SK-N-SH (cell line): ENCODE measurements at regions of chr2 and their contacts with region 1.

Region 1: DNA sequence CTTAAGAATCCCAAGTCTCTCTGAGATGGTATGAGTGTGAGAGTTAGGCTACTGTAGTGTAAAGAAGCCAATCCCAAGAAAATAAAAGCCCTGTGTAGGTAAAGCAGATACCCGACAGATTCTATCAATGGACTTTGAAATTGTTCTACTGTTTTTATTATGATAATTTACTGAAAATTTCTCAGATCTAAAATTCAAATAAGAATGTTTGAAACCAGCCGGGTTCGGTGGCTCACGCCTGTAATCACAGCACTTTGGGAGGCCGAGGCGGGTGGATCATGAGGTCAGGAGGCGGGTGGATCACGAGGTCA is 208.3 kb upstream of the SPRED2 start:
- DNase-seq: no peak
- H3K4me3 ChIP-seq: no peak overlapping the region
- H3K27ac ChIP-seq: no peak overlapping the region
- H3K4me1 ChIP-seq: peaks cover 0 to 5% of the 10 kb centered on the region in 2 experiments; a peak in 2 of 4 replicates
- H3K27me3 ChIP-seq: no peaks in the 10 kb centered on the region
- CTCF ChIP-seq: no peak
- EP300 ChIP-seq: no peak
- RAD21 ChIP-seq: no peak

Region 2: DNA sequence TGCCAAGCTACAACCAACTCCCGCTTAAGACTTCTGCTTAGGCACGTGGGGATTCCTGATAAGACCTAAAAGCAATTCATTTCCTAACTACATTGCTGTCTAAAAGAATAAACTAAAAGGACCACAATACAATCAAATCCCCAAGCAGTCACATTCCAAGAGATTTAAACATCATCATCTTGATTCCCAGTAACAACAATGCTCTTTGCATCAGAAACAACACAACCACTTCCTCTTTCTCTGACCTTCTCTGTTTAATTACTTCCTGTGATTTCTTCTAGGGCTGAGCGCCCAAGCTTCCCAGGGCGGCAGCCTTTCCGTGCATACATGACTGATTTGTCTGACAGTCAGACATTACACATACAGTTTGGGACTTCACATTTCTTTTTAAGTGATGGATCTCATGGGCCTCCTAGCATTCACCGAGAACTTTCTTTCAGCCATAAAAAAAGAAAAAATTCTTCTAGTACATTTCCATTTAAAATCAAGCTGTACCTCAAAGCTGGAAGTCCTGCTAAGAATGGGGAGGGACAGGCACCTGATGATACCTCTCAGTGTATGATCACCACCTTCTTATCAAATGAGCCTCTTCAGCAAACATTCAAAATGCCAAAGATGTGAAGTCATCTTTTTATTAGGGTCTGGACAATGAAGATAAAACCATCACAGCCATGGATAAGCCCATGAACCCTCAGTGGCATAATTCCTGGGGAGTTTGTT is 219.9 kb before region 1 on chr2:
- CTCF ChIA-PET with region 1: no interaction called
- POLR2A ChIA-PET with region 1: no interaction called
- DNase-seq: no peak
- H3K4me3 ChIP-seq: no peak overlapping the region
- H3K27ac ChIP-seq: peak overlapping the region in 1 of 2 experiments; percentile 31; a peak in 1 of 4 replicates
- H3K4me1 ChIP-seq: peaks cover 15 to 20% of the 10 kb centered on the region in 2 experiments; a peak in 3 of 4 replicates
- H3K27me3 ChIP-seq: no peaks in the 10 kb centered on the region
- CTCF ChIP-seq: no peak
- EP300 ChIP-seq: no peak
- RAD21 ChIP-seq: no peak

Region 3: GRCh38 chr2:65566620-65567019 is 74.1 kb before region 1 on chr2:
- CTCF ChIA-PET with region 1: no interaction called
- POLR2A ChIA-PET with region 1: no interaction called
- DNase-seq: no peak
- H3K4me3 ChIP-seq: no peak overlapping the region
- H3K27ac ChIP-seq: no peak overlapping the region
- H3K4me1 ChIP-seq: no peaks in the 10 kb centered on the region
- H3K27me3 ChIP-seq: no peaks in the 10 kb centered on the region
- CTCF ChIP-seq: no peak
- EP300 ChIP-seq: no peak
- RAD21 ChIP-seq: no peak

Region 4: DNA sequence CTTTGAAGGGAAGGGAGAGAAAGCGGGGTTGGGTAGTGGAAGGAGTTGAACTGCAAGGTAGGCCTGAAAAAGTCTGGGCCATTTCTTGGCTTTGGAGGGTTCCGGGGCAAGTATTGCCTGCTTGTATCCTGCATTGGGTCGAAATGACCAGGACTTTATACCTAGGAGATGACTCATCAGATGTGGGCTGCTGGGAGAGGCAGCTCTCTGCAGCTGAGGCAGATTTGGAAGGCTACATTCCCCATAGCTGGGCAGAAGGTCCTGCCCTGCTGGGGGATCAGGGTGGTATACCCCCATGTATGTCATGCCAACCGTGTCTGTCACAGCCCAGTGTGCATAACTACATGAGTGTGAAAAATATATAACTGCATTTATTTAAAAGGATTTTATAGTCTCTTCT is 36.5 kb before region 1 on chr2:
- CTCF ChIA-PET with region 1: no interaction called
- POLR2A ChIA-PET with region 1: no interaction called
- DNase-seq: no peak
- H3K4me3 ChIP-seq: no peak overlapping the region
- H3K27ac ChIP-seq: no peak overlapping the region
- H3K4me1 ChIP-seq: no peaks in the 10 kb centered on the region
- H3K27me3 ChIP-seq: no peaks in the 10 kb centered on the region
- CTCF ChIP-seq: no peak
- EP300 ChIP-seq: no peak
- RAD21 ChIP-seq: no peak

Region 5: GRCh38 chr2:65654496-65654895 is 13.7 kb after region 1 on chr2:
- CTCF ChIA-PET with region 1: interaction called, 16 read pairs
- POLR2A ChIA-PET with region 1: no interaction called
- DNase-seq: no peak
- H3K4me3 ChIP-seq: no peak overlapping the region
- H3K27ac ChIP-seq: no peak overlapping the region
- H3K4me1 ChIP-seq: peaks cover 0 to 15% of the 10 kb centered on the region in 2 experiments; a peak in 1 of 4 replicates
- H3K27me3 ChIP-seq: no peaks in the 10 kb centered on the region
- CTCF ChIP-seq: no peak
- EP300 ChIP-seq: no peak
- RAD21 ChIP-seq: no peak

Region 6: DNA sequence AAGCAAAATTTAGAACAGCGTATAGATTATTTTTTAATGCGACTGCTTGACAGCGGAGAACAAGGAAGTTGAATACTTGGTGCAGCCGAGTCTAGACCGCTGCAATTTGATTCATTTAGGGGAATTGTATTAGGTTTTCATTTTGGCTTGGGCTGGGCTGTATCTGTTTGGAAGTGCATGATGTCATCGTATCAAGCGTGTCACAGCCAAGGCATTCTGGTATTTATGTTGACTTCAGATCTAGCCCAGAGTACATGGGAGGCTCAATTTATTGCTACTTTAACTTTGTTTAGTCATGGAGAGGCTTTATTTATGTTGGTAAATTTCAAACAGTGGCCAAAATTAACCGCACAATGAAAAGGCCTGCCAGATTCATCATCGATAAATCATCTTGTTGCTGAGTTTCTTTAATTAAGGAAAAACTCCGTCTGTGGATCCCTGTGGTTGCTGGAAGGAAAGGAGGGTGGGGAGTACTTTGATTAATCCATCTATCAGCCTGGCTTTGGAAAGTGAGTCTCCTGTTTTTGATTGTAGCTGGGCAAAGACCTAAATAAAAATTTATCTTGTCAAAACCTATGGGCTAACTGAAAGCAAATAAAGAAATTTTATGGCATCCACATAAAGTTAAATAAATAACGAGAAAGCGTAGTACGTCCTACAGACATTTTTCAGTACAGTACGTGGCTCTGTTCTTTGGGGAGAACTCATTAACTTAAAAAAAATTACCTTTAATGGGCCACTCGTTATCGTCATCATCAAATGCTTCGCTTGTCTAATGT is 22.1 kb after region 1 on chr2:
- CTCF ChIA-PET with region 1: interaction called, 11 read pairs
- POLR2A ChIA-PET with region 1: no interaction called
- DNase-seq: no peak
- H3K4me3 ChIP-seq: peak overlapping the region in 1 of 2 experiments; percentile 23; a peak in 1 of 4 replicates
- H3K27ac ChIP-seq: no peak overlapping the region
- H3K4me1 ChIP-seq: peaks cover 0 to 8% of the 10 kb centered on the region in 2 experiments; a peak in 2 of 4 replicates
- H3K27me3 ChIP-seq: no peaks in the 10 kb centered on the region
- CTCF ChIP-seq: no peak
- EP300 ChIP-seq: no peak
- RAD21 ChIP-seq: no peak